ENCODE measurements at regions of chr11 and their contacts with region 1.

Region 1: DNA sequence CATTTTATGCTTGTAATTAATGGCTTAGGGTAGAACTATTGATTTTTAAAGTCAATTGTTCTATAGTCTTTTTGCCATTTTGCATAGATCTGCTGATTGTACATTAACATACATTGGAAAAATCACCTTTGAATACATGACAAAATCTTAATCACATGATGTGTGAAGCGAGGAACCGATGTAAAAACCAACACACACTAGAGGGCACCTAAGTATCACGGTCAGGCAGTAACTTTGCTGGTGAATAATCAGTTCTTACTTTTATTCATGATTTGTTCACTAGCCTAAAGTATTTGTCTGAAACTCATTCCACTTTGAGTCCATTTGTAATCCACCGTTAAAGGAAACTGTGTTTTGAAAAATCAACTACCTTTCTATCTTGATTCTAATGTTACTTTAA is 28.2 kb downstream of the JHY start:
- DNase-seq: peak; percentile 8
- ATAC-seq: 0 out of 2 replicates have a peak, but pooled peaks have one; percentile 71
- H3K4me3 ChIP-seq: no peak overlapping the region
- H3K27ac ChIP-seq: no peak overlapping the region
- H3K4me1 ChIP-seq: no peaks in the 10 kb centered on the region
- H3K27me3 ChIP-seq: no peaks in the 10 kb centered on the region
- CTCF ChIP-seq: peak; percentile 61; the same call in 1 of the 2 replicates

Region 2: DNA sequence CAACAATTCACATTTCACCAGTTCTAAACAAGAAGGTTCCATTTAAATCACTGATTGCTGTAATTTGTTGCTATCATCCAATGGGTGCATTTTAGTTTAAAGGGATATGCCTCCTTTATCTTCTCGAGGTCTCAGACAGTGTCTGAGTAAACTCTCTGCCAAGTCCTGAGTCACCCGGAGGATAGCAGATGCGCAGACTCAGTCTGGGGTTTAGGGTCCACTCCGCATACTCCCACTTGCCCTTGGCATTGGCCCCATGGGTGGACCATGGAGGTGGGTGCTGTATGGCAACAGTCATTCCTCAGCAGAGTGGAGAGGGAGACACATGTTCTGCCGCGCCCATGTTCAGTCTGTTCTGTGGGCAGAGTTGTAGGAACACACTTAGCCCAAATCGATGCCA is 137.8 kb before region 1 on chr11:
- CTCF ChIA-PET with region 1: no interaction called
- POLR2A ChIA-PET with region 1: no interaction called
- in situ Hi-C with region 1: no loop called
- intact Hi-C with region 1: no loop called
- DNase-seq: no peak
- ATAC-seq: 0 out of 2 replicates have a peak, but pooled peaks have one; percentile 30
- H3K4me3 ChIP-seq: no peak overlapping the region
- H3K27ac ChIP-seq: no peak overlapping the region
- H3K4me1 ChIP-seq: no peaks in the 10 kb centered on the region
- H3K27me3 ChIP-seq: no peaks in the 10 kb centered on the region
- CTCF ChIP-seq: no peak

Region 3: DNA sequence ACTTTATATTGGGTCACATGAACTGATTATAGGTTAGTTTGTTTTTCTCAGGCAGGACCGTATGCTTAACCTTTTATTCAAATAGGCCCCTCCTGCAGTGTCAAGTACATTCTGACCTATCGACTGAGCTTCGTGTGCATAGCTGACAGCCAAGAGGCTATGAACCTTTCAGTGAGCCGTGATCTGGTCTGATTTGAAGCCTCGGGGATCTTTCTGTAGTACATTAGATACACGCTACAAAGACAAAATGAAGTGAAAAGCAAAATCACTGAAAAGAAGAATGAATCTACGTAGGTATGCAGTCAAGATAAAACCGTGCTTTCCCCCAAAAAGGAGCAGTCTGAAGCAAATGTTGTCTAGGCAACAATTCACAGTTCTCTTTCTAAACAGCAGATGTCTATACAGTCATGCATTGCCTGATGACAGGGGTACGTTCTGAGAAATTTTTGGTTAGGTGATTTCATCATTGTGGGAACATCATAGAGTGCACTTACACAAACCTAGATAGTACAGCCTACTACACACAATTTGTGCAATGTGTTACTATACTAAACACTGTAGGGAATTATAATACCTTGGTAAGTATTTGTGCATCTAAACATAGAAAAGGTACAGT is 10.1 kb before region 1 on chr11:
- CTCF ChIA-PET with region 1: interaction called, 12 read pairs
- POLR2A ChIA-PET with region 1: no interaction called
- in situ Hi-C with region 1: no loop called
- intact Hi-C with region 1: no loop called
- DNase-seq: no peak
- ATAC-seq: no peak
- H3K4me3 ChIP-seq: no peak overlapping the region
- H3K27ac ChIP-seq: no peak overlapping the region
- H3K4me1 ChIP-seq: no peaks in the 10 kb centered on the region; the same call in 1 of the 2 replicates
- H3K27me3 ChIP-seq: no peaks in the 10 kb centered on the region
- CTCF ChIP-seq: no peak

Region 4: DNA sequence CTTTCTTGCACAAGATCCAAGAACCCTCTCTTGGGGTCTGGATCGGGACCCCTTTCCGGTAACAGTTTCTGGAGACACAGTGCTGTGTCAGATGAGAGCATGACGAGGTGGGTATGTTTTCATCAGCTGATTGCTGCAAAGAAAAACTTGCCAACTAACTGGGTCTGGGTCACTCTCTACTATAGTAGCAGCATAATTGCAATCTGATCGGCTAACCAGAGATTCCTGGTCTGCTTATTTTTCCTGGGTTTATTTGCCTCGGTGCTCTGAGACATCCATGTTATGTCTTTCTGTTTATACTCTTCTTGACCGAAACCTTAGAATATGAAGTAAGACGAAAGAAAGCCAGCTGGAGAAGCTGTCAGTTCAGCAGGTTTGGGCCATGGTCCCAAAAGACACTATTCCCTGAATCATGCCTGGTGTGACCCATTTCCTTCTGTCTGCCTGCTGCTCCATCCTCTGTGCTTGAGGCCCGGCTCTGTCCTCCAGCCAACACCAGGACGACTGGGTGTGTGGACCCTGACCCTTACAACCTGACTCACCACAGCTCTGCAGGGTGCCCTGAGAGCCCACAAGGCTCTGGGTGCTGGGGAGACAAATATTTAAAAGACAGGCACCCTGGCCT is 308.4 kb after region 1 on chr11:
- CTCF ChIA-PET with region 1: no interaction called
- POLR2A ChIA-PET with region 1: no interaction called
- in situ Hi-C with region 1: no loop called
- intact Hi-C with region 1: no loop called
- DNase-seq: no peak
- ATAC-seq: no peak; the same call in 1 of the 2 replicates
- H3K4me3 ChIP-seq: no peak overlapping the region
- H3K27ac ChIP-seq: no peak overlapping the region
- H3K4me1 ChIP-seq: no peaks in the 10 kb centered on the region; the same call in 1 of the 2 replicates
- H3K27me3 ChIP-seq: peaks cover 1% of the 10 kb centered on the region; the same call in 1 of the 2 replicates
- CTCF ChIP-seq: no peak